Sigmoid colon (tissue), 7 donors: ENCODE measurements at regions of chr10 and their contacts with region 1.

Region 1: GRCh38 chr10:132637477-132638129 is 100.0 kb downstream of the INPP5A start:
- DNase-seq: peak; percentile 60
- H3K4me3 ChIP-seq: peak overlapping the region in 3 of 4 donors; percentile 4 to 15 (median 9)
- H3K27ac ChIP-seq: peak overlapping the region; percentile 88 to 98 (median 96)
- H3K4me1 ChIP-seq: peaks cover 0 to 82% (median 73%) of the 10 kb centered on the region in 4 donors
- H3K27me3 ChIP-seq: no peaks in the 10 kb centered on the region
- CTCF ChIP-seq: peak; percentile 68 to 87 (median 81)
- EP300 ChIP-seq: no peak
- POLR2A ChIP-seq: no peak

Region 2: GRCh38 chr10:132396495-132397035 is 241.0 kb before region 1 on chr10:
- intact Hi-C with region 1: loop called (anchors 5 kb)
- DNase-seq: peak; percentile 85
- H3K4me3 ChIP-seq: peak overlapping the region; percentile 34 to 99 (median 76)
- H3K27ac ChIP-seq: peak overlapping the region; percentile 91 to 99 (median 96)
- H3K4me1 ChIP-seq: peaks cover 0 to 52% (median 51%) of the 10 kb centered on the region in 4 donors
- H3K27me3 ChIP-seq: no peaks in the 10 kb centered on the region
- CTCF ChIP-seq: peak in 1 of 4 experiments; percentile 43
- EP300 ChIP-seq: no peak
- POLR2A ChIP-seq: no peak

Region 3: GRCh38 chr10:132458593-132459300 is 178.9 kb before region 1 on chr10:
- intact Hi-C with region 1: loop called (anchors 1 kb)
- DNase-seq: no peak
- H3K4me3 ChIP-seq: no peak overlapping the region
- H3K27ac ChIP-seq: no peak overlapping the region
- H3K4me1 ChIP-seq: peaks cover 0 to 20% (median 19%) of the 10 kb centered on the region in 4 donors
- H3K27me3 ChIP-seq: no peaks in the 10 kb centered on the region
- CTCF ChIP-seq: peak; percentile 96 to 99 (median 98)
- EP300 ChIP-seq: no peak
- POLR2A ChIP-seq: no peak

Region 4: GRCh38 chr10:132516771-132517725 is 120.6 kb before region 1 on chr10:
- intact Hi-C with region 1: loop called (anchors 5 kb)
- DNase-seq: peak; percentile 99
- H3K4me3 ChIP-seq: peak overlapping the region in 3 of 4 donors; percentile 7 to 32 (median 8)
- H3K27ac ChIP-seq: peak overlapping the region; percentile 80 to 94 (median 90)
- H3K4me1 ChIP-seq: peaks cover 0 to 64% (median 59%) of the 10 kb centered on the region in 4 donors
- H3K27me3 ChIP-seq: no peaks in the 10 kb centered on the region
- CTCF ChIP-seq: no peak
- EP300 ChIP-seq: peak in 2 of 4 donors; percentile 35 to 69
- POLR2A ChIP-seq: no peak

Region 5: DNA sequence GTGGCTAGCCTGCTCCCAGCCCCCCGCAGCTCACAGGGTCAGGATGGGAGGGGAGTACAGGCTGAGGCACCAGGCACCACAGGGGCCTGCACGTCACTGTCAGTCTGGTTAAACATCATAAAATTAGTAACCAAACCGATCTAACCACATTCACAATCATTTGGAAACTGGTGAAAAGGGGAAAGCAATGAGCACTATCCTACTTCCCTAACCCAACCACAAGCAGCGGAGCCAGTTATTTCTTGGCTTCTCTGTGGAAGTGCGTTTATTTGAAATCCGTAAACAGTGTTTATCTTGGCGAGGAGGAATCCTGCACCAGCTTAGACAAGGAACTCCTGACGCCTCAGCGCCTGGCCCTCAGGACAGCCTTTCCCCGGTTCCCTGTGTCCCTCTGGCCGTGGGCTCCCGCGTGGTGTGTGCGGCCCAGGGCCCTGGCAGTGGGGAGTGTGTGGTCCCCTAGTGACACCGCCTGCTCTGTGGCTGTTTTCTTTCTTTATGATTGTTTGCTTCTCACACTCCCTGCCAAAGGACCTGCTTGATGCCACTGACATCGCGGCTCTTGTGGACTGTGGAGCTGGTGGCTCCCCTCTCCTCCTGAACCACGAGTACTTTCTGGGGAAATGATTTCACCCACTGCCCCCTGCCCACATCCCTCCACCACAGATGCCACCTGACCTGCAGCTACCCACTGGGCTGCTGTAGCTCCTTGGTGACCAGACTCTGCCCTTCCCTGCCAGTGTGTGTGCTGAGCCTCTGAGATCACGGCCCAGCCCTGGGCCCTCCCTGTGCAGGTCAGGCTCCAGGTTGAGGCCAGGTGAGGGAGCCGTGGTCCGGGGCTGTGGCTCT is 62.0 kb before region 1 on chr10:
- intact Hi-C with region 1: loop called (anchors 5 kb)
- DNase-seq: no peak
- H3K4me3 ChIP-seq: peak overlapping the region in 2 of 4 donors; percentile 7 to 10
- H3K27ac ChIP-seq: peak overlapping the region; percentile 70 to 83 (median 76)
- H3K4me1 ChIP-seq: peaks cover 0 to 85% (median 80%) of the 10 kb centered on the region in 4 donors
- H3K27me3 ChIP-seq: no peaks in the 10 kb centered on the region
- CTCF ChIP-seq: no peak
- EP300 ChIP-seq: peak in 1 of 4 donors; percentile 29
- POLR2A ChIP-seq: no peak

Region 6: GRCh38 chr10:132961787-132962622 is 324.4 kb after region 1 on chr10:
- intact Hi-C with region 1: no loop called
- DNase-seq: peak; percentile 75
- H3K4me3 ChIP-seq: peak overlapping the region; percentile 37 to 63 (median 56)
- H3K27ac ChIP-seq: peak overlapping the region in 1 of 4 donors; percentile 42
- H3K4me1 ChIP-seq: peaks cover 0 to 13% (median 11%) of the 10 kb centered on the region in 4 donors
- H3K27me3 ChIP-seq: peaks cover 0 to 27% (median 5%) of the 10 kb centered on the region in 3 donors
- CTCF ChIP-seq: no peak
- EP300 ChIP-seq: no peak
- POLR2A ChIP-seq: no peak